ENCODE measurements at regions of chr16 and their contacts with region 1.

Region 1: DNA sequence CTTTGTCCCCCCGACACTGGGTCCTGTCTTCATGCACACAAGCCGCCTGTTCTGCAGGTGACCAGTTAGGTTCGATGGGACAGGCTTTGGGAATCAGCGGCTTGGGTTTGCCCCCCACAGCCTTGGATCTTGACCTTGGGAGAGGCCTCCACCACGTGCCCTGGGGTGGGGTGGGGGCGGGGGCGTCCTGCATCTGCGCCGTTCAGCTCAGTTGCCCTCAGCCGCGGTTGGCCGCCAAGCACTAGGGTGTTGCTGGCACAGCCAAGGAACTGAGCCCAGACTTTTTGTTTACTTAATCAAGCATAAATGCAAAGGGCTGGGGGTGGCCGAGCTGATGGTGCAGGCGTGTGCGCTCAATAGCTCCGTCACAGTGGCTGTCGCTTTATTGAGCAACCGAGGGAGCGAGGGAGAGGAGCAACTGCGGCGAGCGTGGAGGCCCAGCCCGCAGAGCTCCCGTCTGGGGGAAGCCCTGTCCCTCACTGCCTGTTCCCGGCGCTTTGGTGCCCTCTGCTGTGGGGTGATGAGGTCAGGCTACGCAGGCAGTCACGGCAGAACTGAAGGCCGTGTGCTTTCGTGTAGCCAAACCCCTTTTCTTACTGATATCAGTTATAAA is 33.9 kb downstream of the JPH3 start:
- DNase-seq: peak; percentile 16
- H3K4me3 ChIP-seq: no peak overlapping the region
- H3K27me3 ChIP-seq: peaks cover 7% of the 10 kb centered on the region
- CTCF ChIP-seq: peak; percentile 82

Region 2: GRCh38 chr16:87391950-87392822 is 244.0 kb before region 1 on chr16 and contains the start of gene MAP1LC3B:
- CTCF ChIA-PET with region 1: interaction called, 27 read pairs
- POLR2A ChIA-PET with region 1: interaction called, 3 read pairs
- DNase-seq: peak; percentile 76
- H3K4me3 ChIP-seq: peak within 1 kb of the TSS; percentile 46
- H3K27me3 ChIP-seq: no peaks in the 10 kb centered on the region
- CTCF ChIP-seq: no peak
- polyA plus RNA-seq, gene MAP1LC3B: 29.0 and 50.7 TPM in 2 replicates

Region 3: DNA sequence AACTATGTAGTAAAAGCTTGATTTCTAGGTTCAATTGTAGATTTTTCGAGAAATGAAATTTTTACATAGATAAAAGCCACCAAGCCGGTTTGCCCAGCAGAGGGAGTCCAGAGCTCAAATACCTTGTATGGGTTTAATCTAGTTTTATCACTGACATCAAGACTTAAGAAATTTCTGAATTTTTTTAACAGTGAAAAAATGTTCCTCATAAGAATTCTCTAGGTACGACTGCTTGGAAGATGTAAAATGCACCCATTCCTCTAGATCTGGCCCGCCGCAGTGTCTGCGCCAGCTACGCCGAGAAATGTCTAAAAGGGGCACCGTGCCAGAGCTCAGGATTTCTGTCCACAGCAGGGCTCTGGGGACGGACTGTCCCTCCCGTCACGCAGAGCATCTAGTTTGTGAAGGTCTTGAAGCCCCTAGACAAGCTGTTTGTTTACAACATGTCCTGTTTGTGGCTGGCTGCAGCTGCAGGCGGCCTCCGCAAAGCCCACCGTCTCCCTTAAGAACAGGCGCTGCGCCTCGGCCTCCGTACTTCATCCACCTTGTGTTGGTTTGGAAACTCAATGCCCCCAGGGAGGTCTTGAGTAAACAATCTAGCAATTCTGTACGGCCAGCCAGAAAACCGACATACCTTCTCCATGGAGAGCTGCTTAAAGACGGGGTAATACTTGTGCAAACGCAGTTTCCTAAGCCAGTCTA is 219.2 kb before region 1 on chr16:
- CTCF ChIA-PET with region 1: interaction called, 66 read pairs
- POLR2A ChIA-PET with region 1: no interaction called
- DNase-seq: no peak
- H3K4me3 ChIP-seq: no peak overlapping the region
- H3K27me3 ChIP-seq: no peaks in the 10 kb centered on the region
- CTCF ChIP-seq: peak; percentile 75

Region 4: DNA sequence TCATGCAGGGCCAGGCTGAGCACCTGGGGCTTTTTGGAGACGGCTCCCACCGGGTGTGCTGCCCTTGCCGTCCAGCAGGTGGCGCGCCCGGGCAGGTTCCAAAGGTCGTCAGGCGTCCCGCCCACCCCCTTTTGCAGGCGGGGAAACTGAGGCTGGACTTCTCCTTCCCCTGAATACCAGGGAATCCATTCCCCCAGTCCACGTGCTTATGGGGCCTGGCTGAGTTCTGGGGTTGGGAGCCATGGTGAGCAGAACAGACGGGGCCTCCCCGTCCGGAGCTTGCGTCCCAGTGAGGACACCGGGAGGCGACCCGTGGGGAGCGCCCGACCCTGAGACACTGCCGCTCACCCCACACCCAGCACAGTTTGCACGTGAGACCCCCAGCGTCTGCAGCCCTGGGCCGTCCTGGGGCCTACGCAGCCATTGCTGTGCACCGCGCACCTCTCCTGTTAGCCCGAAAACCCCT is 85.6 kb before region 1 on chr16:
- CTCF ChIA-PET with region 1: interaction called, 16 read pairs
- POLR2A ChIA-PET with region 1: no interaction called
- DNase-seq: no peak
- H3K4me3 ChIP-seq: no peak overlapping the region
- H3K27me3 ChIP-seq: peaks cover 12% of the 10 kb centered on the region
- CTCF ChIP-seq: peak; percentile 98

Region 5: GRCh38 chr16:87571136-87571867 is 64.9 kb before region 1 on chr16:
- CTCF ChIA-PET with region 1: interaction called, 14 read pairs
- POLR2A ChIA-PET with region 1: no interaction called
- DNase-seq: no peak
- H3K4me3 ChIP-seq: no peak overlapping the region
- H3K27me3 ChIP-seq: peaks cover 2% of the 10 kb centered on the region; the same call in 1 of the 2 replicates
- CTCF ChIP-seq: peak; percentile 62

Region 6: DNA sequence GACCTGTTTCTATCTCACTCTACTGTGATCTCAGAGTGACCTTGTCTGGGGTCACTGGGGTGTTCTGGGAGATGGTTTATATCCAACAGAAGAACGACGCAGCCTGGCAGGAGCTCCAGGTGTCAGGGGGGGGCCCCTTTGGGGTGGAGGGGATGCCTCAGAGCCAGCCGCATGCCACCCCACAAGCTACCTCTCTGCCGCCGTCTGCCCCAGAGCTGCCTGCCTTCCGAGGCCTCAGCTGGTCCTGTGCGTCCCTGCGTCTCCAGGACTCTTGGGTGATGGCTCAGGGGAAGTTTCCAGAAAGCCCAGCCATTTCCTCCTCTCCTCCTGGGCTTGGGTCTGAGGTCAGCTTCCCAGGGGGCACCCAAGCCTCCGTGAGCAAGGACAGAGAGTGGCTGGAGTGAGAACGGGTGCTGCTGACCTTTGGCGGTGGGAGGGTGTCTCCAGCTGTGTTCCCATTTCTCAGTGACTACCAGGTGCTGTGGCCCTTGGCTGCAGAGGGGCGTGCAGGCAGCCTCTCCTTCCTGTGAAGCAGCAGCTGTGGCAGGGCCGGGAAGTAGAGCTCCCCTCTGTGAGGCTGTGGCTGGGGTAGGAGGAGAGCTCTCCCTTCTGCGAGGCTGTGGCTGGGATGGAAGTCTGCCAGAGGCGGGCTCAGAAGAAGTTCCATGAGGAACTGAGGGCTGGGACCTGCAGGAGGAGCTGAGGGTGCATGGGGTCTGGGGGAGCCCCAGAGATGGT is 14.0 kb before region 1 on chr16:
- CTCF ChIA-PET with region 1: interaction called, 20 read pairs
- POLR2A ChIA-PET with region 1: no interaction called
- DNase-seq: no peak
- H3K4me3 ChIP-seq: no peak overlapping the region
- H3K27me3 ChIP-seq: peaks cover 5% of the 10 kb centered on the region
- CTCF ChIP-seq: no peak

Region 7: GRCh38 chr16:87666919-87667318 is 30.7 kb after region 1 on chr16:
- CTCF ChIA-PET with region 1: no interaction called
- POLR2A ChIA-PET with region 1: no interaction called
- DNase-seq: no peak
- H3K4me3 ChIP-seq: no peak overlapping the region
- H3K27me3 ChIP-seq: peaks cover 5% of the 10 kb centered on the region
- CTCF ChIP-seq: no peak

Measured in BJ (cell line).